Activated naive CD4-positive, alpha-beta T cell treated with anti-CD3 and anti-CD28 coated beads for 36 hours (primary cell): ENCODE measurements at regions of chr3 and their contacts with region 1.

Region 1: GRCh38 chr3:128993461-128994173 is at the start of gene CFAP92:
- DNase-seq: peak; percentile 95
- H3K4me3 Mint-ChIP-seq: peak within 1 kb of the TSS; percentile 68
- H3K27ac Mint-ChIP-seq: no peak within 1 kb of the TSS
- H3K4me1 Mint-ChIP-seq: peaks cover 25% of the 10 kb centered on the region
- H3K27me3 Mint-ChIP-seq: no peaks in the 10 kb centered on the region
- total RNA-seq, gene CFAP92: 0.32 to 0.48 TPM

Region 2: DNA sequence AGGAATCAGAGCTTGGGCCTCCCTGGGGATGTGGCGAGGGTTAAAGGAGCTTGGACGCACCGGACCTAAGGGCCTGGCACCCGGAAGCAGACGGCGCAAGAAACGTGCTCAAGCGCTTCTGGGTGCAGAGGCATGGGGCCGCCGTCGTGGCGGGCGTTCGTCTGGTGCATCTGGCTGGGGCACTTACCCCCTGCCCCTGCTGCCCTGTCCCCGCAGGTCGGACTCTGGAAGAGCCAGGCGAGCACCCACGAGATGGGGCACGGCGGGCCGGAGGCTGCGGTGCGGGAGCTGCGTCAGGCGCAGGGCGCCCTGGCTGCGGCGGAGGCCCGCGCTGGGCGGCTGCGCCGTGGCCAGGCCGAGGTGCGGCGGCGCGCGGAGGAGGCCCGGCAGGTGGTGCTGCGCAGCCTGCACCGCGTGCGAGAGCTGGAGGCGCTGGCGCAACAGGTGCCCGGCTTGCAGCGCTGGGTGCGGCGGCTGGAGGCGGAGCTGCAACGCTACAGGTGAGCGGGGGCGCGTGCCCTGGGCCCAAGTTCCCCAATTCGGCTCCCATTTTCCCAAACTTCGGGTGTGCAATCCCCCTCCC is 10.1 kb after region 1 on chr3:
- CTCF ChIA-PET with region 1: interaction called, 7 read pairs
- intact Hi-C with region 1: loop called (anchors 1 kb)
- DNase-seq: peak; percentile 69
- H3K4me3 Mint-ChIP-seq: peak overlapping the region; percentile 53
- H3K27ac Mint-ChIP-seq: no peak overlapping the region
- H3K4me1 Mint-ChIP-seq: peaks cover 36% of the 10 kb centered on the region
- H3K27me3 Mint-ChIP-seq: peaks cover 21% of the 10 kb centered on the region

Region 3: GRCh38 chr3:129316131-129317013 is 322.8 kb after region 1 on chr3:
- CTCF ChIA-PET with region 1: no interaction called
- intact Hi-C with region 1: loop called (anchors 10 kb)
- DNase-seq: peak; percentile 87
- H3K4me3 Mint-ChIP-seq: peak overlapping the region; percentile 96
- H3K27ac Mint-ChIP-seq: peak overlapping the region; percentile 85
- H3K4me1 Mint-ChIP-seq: peaks cover 14% of the 10 kb centered on the region
- H3K27me3 Mint-ChIP-seq: no peaks in the 10 kb centered on the region